ENCODE measurements at regions of chr20 and their contacts with region 1.

Region 1: GRCh38 chr20:38859070-38859690 is 53.7 kb downstream of the PPP1R16B start:
- DNase-seq: peak; percentile 51
- H3K4me3 Mint-ChIP-seq: no peak overlapping the region
- H3K27ac Mint-ChIP-seq: peak overlapping the region; percentile 60
- H3K4me1 Mint-ChIP-seq: peaks cover 88% of the 10 kb centered on the region
- H3K27me3 Mint-ChIP-seq: no peaks in the 10 kb centered on the region

Region 2: DNA sequence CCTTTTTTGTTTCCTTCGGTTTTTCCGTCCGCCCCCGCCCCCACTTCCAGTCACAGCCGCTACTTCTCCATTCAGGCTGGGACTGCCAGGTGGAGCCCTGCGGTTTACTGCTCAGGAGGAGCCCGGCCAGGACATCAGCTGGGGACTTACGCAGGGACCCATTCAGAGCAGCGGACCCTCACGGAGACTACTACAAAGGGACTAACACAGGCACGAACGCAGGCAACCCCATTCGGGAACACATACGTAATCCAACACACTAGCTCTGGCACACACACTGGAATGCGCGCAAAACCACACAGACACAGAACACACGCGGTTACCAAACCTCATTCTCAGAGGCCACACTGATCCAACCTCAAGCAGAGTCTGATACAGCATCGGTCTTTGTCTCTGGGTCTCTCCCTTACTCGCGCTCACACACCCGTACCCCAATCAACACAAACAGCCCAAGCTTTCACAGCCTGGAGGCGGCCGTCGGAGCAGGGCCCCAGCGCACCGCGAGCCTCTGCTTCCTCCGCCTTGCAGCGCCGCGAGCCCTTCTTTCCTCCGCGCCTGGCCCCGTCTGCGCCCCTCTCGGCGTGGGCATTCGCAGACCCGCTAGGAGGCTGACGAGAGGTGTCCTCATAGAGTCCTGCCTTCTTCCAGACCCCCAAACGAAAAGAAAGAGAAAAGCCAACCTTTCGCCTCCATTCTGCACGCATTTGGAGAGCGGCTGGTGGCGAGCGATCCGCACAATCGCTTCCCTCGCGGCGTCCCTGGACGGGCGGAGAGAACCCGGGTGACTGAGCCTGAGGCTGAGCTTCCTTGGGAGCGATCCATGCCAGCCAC is 135.9 kb before region 1 on chr20:
- CTCF ChIA-PET with region 1: no interaction called
- POLR2A ChIA-PET with region 1: no interaction called
- DNase-seq: no peak
- H3K4me3 Mint-ChIP-seq: peak overlapping the region; percentile 17
- H3K27ac Mint-ChIP-seq: peak overlapping the region; percentile 44
- H3K4me1 Mint-ChIP-seq: peaks cover 35% of the 10 kb centered on the region
- H3K27me3 Mint-ChIP-seq: peaks cover 86% of the 10 kb centered on the region

Region 3: DNA sequence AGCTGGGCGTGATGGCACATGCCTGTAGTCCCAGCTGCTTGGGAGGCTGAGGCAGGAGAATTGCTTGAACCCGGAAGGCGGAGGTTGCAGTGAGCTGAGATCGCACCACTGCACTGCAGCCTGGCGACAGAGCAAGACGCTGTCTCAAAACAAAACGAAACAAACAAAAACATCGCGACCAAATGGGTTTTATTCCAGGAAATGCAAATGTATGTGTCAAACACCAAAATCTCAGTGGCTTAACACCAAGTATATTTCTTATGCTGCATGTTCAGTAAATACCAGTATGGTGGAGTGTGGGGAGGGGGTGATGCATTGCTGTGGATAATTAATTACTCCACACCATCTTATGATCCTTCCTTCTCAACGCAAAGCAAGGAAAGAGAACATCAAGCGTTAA is 82.8 kb before region 1 on chr20:
- CTCF ChIA-PET with region 1: no interaction called
- POLR2A ChIA-PET with region 1: no interaction called
- DNase-seq: no peak
- H3K4me3 Mint-ChIP-seq: no peak overlapping the region
- H3K27ac Mint-ChIP-seq: no peak overlapping the region
- H3K4me1 Mint-ChIP-seq: no peaks in the 10 kb centered on the region
- H3K27me3 Mint-ChIP-seq: no peaks in the 10 kb centered on the region

Region 4: DNA sequence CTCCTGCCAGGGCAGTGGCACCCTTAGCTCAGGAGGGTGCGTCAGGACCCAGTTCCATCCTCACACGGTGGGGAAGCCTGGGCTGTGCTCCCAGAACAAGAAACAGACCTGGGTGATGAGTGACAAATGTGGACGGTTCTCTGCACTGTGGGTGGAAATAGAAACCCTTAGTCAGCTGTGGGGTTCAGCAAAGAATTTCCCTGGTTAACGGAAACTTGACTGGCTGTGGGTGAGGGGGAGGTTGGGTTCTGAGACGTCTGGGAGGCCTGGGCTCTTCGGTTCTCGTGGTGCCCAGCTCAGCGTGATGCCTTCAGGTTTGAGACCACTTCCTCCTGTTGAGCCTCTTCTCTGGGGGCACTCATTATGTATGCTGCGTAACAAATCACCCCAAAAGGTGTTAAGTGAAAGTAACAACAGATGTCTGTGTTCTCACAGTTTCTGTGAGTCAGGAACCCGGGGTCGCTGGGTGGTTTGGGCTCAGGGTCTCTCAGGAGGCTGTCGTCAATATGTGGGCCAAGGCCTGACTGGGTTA is 13.9 kb after region 1 on chr20:
- CTCF ChIA-PET with region 1: interaction called, 10 read pairs
- POLR2A ChIA-PET with region 1: interaction called, 5 read pairs
- DNase-seq: peak; percentile 75
- H3K4me3 Mint-ChIP-seq: peak overlapping the region; percentile 59
- H3K27ac Mint-ChIP-seq: peak overlapping the region; percentile 90
- H3K4me1 Mint-ChIP-seq: peaks cover 88% of the 10 kb centered on the region
- H3K27me3 Mint-ChIP-seq: no peaks in the 10 kb centered on the region